IMR-90 (cell line): ENCODE measurements at regions of chr9 and their contacts with region 1.

Region 1: GRCh38 chr9:123380852-123381642 is 25.1 kb downstream of the CRB2 start:
- DNase-seq: no peak
- ATAC-seq: no peak
- H3K4me3 ChIP-seq: no peak overlapping the region
- H3K27ac ChIP-seq: no peak overlapping the region
- H3K4me1 ChIP-seq: no peaks in the 10 kb centered on the region
- H3K27me3 ChIP-seq: peaks cover 4% of the 10 kb centered on the region; the same call in 1 of the 2 replicates
- CTCF ChIP-seq: no peak
- POLR2A ChIP-seq: no peak
- RAD21 ChIP-seq: no peak

Region 2: DNA sequence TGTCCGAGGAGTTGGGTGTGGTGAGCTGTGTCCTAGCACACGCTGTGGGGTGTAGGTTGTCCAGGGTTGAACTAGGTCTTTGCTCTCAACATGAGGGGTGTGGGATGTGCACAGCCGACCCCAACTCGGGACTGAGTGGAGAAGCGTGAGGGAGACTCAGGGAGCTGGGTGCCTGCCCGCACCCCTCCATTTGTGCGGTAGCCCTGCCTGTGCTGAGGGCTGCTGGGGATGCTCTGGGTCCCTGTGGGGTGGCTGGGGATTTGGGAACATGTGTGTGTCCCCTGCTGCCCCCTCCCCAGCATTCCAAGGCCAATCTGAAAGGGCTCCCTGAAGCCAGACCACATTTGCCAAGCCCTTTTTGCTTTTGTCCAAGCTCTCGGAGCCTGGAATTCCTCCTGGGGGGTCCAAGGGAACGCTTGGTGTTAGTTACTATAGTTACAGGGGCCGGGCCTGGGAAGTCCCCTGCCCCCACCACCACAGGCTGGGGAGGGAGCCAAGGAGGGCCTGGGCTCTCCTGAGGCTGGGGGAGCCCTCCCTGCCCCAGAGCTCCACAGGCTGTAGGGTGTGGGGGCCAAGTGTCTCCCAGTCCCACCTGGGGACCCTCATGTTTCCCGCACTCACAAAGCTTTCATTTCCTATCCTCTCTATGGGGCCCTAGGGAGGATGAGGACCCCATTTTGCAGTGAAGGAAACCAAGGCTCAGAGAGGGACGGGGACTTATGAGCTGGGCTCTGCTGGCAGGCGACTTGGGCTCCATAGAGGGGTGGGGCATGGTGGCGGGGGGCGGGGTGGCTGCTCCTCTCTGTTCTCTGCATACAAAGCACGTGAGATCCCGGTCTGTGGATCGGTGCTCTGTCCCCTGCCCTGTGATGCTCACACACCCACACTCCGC is 23.9 kb before region 1 on chr9:
- CTCF ChIA-PET with region 1: interaction called, 4 read pairs
- POLR2A ChIA-PET with region 1: no interaction called
- dilution Hi-C with region 1: no loop called
- in situ Hi-C with region 1: no loop called
- intact Hi-C with region 1: loop called (anchors 1 kb)
- DNase-seq: no peak
- ATAC-seq: no peak
- H3K4me3 ChIP-seq: no peak overlapping the region
- H3K27ac ChIP-seq: no peak overlapping the region
- H3K4me1 ChIP-seq: peaks cover 8% of the 10 kb centered on the region; the same call in 1 of the 2 replicates
- H3K27me3 ChIP-seq: peaks cover 42% of the 10 kb centered on the region
- CTCF ChIP-seq: no peak
- POLR2A ChIP-seq: no peak
- RAD21 ChIP-seq: no peak